Activated naive CD4-positive, alpha-beta T cell treated with anti-CD3 and anti-CD28 coated beads for 36 hours (primary cell): ENCODE measurements at regions of chr2 and their contacts with region 1.

Region 1: DNA sequence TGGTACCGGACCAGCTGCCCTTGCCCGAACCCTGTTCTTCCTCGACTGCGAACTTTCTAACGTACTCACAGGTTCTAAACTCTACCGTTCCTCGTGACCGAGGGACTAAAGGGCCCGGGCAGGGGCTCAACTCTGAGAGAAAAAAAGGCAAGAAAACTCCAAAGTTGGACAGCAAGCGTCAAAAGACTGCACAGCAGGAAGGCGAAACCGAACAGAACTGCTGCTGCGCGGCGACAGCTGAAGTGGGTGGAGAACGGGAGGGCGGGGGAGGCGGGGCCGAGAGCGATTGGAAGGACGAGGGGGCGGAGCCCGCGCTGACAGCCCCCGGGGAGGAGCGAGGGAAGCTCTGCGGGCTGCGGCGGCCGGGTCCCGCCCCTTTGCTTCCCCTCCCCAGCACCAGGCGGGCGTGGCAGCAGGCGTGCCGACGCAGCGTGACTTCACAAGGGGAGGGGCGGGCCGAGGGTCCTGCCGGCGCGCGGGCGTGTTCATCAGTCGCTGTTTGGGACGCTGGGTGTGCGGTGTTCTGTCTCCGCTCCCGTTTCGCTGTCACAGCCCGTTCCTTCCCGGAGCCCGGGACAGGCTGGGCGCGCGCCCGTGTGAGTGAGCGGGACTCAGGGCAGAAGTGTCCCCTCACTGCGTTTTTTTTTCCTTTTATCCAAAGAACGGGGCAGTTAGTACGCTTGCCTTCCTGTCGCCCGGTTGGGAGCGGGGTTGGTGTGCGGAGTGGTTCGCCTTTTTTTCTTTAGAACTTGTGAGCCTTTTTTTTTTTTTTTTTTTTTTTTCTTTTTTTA is at the start of gene NABP1:
- DNase-seq: peak; percentile 99
- H3K4me3 Mint-ChIP-seq: peak within 1 kb of the TSS; percentile 99
- H3K27ac Mint-ChIP-seq: peak within 1 kb of the TSS; percentile 100
- H3K4me1 Mint-ChIP-seq: peaks cover 37% of the 10 kb centered on the region
- H3K27me3 Mint-ChIP-seq: no peaks in the 10 kb centered on the region
- total RNA-seq, gene NABP1: 97.5 to 101 TPM

Region 2: DNA sequence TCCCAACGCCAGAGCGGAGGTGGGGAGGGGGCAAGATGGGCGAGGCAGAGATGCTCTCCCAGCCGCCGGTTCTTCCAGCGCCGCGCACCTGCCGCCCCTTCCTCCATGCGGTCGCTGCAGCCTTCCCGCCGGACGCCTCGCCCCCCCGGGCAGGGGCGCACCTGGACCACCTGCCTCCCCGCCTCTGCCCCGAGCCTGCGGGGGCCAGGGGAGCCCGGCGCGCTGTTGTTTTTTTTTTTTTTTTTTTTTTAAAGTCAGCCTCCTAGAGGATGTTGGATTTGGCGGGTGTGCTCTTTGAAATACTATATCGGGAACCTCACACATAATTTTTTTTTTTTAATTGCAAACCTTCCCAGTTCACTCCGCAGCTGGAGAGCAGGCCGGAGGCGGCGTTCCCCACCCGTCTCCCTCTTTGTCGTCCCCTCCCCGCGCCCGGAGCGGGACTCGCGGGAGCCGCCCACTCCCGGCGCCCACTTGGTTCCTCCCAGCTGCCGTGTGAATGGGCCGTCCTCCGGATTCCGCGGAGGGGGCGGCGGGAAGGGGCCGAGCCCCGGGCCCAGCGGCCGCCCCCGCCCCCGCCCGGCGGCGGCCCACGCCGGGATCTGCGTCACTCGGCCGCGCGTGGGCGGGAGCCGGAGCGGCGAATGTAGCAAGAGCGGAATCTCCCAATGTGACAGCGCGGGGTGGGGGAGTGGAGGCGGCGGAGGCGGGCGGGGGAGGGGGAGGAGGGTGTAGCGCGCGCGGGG is 1029.4 kb before region 1 on chr2:
- CTCF ChIA-PET with region 1: no interaction called
- intact Hi-C with region 1: loop called (anchors 5 kb)
- DNase-seq: peak; percentile 81
- H3K4me3 Mint-ChIP-seq: peak overlapping the region; percentile 68
- H3K27ac Mint-ChIP-seq: peak overlapping the region; percentile 76
- H3K4me1 Mint-ChIP-seq: peaks cover 43% of the 10 kb centered on the region
- H3K27me3 Mint-ChIP-seq: no peaks in the 10 kb centered on the region

Region 3: DNA sequence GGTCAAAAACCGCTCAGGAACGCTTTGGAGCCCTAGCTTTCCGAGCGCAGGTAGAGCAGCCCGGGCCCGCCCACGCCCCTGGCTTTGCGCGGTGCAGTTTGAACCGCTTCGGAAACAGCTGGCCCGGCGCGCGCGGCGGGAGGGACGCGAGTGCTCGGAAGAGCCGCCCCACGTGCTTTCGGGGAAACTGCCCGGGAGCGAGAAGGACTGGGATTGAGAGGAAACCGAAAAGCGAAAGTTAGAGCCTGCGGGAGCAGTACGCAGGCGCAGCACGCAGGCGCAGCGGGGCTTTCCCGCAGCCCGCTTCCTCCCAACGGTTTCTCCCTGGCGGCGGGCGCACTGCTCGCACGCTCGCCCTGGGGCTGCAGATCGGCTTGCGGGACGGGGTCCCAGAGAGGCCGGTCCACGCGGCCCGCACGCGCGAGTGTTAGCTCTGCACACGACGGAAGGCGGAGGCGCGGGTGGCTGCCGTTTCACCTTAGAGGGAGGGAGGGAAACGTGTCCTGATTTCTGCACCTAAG is 657.6 kb before region 1 on chr2:
- CTCF ChIA-PET with region 1: no interaction called
- intact Hi-C with region 1: loop called (anchors 2 kb)
- DNase-seq: peak; percentile 93
- H3K4me3 Mint-ChIP-seq: no peak overlapping the region
- H3K27ac Mint-ChIP-seq: no peak overlapping the region
- H3K4me1 Mint-ChIP-seq: peaks cover 36% of the 10 kb centered on the region
- H3K27me3 Mint-ChIP-seq: no peaks in the 10 kb centered on the region

Region 4: GRCh38 chr2:191114403-191114886 is 563.4 kb before region 1 on chr2:
- CTCF ChIA-PET with region 1: no interaction called
- intact Hi-C with region 1: loop called (anchors 1 kb)
- DNase-seq: peak; percentile 74
- H3K4me3 Mint-ChIP-seq: peak overlapping the region; percentile 57
- H3K27ac Mint-ChIP-seq: peak overlapping the region; percentile 87
- H3K4me1 Mint-ChIP-seq: peaks cover 78% of the 10 kb centered on the region
- H3K27me3 Mint-ChIP-seq: no peaks in the 10 kb centered on the region

Region 5: DNA sequence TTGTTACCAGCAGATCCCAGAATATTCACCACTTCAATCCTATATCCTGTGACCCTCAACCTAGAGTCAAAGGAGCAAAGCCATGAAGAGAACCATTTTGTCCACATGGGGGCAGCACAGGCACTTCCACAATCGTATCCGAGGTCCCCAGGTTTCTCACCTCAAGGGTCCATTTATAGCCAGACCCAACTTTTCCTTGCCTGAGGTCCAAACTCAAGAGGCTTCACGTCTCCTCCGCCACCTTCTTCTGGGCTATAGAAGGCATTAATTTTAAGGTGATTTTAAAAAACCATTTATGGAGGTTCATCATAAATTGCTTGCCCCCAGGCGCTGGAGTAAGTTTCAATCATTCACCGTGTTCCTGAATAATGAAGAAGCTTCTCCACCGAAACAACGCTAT is 111.5 kb before region 1 on chr2:
- CTCF ChIA-PET with region 1: interaction called, 5 read pairs
- intact Hi-C with region 1: loop called (anchors 1 kb)
- DNase-seq: peak; percentile 83
- H3K4me3 Mint-ChIP-seq: no peak overlapping the region
- H3K27ac Mint-ChIP-seq: no peak overlapping the region
- H3K4me1 Mint-ChIP-seq: peaks cover 20% of the 10 kb centered on the region
- H3K27me3 Mint-ChIP-seq: peaks cover 11% of the 10 kb centered on the region

Region 6: GRCh38 chr2:191625016-191625415 is 52.8 kb before region 1 on chr2:
- CTCF ChIA-PET with region 1: interaction called, 5 read pairs
- intact Hi-C with region 1: loop called (anchors 2 kb)
- DNase-seq: peak; percentile 72
- H3K4me3 Mint-ChIP-seq: no peak overlapping the region
- H3K27ac Mint-ChIP-seq: peak overlapping the region; percentile 89
- H3K4me1 Mint-ChIP-seq: peaks cover 83% of the 10 kb centered on the region
- H3K27me3 Mint-ChIP-seq: no peaks in the 10 kb centered on the region

Region 7: DNA sequence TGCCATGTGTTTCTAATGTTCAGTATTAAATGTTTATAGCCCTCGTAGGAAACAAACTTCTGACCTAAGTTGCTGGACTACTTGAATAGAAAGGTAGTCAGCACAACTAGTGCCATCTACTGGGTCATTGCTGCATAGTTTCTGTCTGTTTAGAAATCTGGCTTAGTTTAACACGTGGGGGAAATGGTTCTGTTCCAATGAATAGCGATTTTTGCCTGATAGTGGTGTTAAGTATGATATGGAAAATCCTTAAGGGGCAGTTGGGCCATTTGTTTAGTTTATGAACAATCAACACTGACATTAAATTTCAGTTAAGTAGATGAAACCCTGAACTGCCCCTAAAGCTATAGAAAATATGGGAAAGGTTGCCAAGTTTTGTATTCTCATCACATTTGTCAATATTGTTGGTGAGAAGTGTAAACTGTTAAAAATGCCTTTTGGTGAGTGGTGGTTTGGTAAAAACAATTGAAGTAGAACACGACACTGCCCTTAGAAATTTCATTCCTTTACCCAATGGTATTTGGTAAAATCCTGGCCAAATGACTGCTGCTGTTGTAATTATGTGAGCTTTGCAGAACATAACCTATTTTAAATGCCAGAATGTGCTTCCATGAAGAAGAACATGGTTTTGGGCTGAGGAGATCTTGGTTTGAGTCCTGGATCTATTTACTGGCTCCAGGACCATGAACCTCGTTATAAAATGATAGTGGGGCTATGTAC is 13.3 kb after region 1 on chr2:
- CTCF ChIA-PET with region 1: interaction called, 5 read pairs
- intact Hi-C with region 1: loop called (anchors 1 kb)
- DNase-seq: peak; percentile 73
- H3K4me3 Mint-ChIP-seq: no peak overlapping the region
- H3K27ac Mint-ChIP-seq: peak overlapping the region; percentile 72
- H3K4me1 Mint-ChIP-seq: peaks cover 66% of the 10 kb centered on the region
- H3K27me3 Mint-ChIP-seq: no peaks in the 10 kb centered on the region

Region 8: DNA sequence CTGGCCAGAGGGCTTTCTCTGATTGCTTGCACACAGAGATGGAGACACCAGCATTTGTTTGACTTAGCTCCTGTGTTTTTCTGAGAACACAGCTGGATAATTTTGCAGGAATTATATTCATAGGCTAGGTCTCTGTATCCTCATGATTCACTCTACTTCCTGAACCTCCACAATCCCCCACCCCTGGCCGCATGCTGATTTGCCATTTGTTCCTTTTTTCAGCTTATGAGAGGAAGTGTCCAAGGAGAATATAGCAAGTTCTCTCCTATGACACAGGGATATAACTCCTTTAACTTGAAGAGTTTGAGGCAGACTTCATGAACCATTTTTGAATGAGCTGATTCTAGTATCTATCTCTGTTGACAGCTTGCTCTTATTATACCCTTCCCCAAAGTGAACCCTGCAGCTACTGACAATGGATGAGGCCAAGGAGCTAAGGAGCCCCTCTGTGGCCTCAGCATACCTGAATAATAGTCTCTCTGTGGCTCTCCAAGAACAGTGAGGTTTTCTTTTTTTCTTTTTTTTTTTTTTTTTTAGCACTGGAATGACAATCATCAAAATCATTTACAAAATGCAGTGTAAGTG is 153.7 kb after region 1 on chr2:
- CTCF ChIA-PET with region 1: no interaction called
- intact Hi-C with region 1: no loop called
- DNase-seq: no peak
- H3K4me3 Mint-ChIP-seq: no peak overlapping the region
- H3K27ac Mint-ChIP-seq: no peak overlapping the region
- H3K4me1 Mint-ChIP-seq: no peaks in the 10 kb centered on the region
- H3K27me3 Mint-ChIP-seq: peaks cover 4% of the 10 kb centered on the region